ENCODE measurements at regions of chr5 and their contacts with region 1.

Region 1: DNA sequence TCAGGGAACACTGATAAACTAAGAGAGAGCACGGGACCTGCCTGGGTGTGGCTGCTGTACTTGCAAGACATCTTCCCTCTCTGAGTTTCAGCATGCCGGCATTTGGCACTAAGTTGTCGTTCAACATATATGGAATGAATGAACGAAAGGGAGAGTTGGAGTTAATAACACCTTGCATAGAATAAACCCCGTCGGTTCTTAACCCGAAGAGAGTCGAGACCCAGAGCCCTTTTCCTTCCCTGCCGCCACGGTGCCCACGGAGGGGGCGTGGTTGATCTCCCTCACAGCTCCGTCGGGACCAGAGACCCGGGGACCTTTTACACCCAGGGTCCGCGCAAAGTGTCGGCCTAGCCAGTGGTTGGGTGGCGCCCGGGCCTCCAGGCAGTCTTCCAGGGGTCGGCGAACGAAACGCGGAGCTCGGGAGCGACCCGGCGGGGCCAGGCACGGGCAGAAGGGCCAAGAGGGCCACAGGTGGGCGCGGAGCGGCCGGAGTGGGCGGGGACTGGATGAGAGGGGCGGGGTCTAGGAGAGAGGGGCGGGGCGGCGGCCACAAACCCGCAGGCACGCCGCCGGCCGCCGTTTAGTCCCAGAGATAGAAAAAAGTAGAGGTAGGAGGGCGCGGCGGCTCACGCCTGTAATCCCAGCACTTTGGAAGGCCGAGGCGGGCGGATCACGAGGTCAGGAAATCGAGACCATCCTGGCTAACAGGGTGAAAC is 735 bp upstream of the RPL26L1 start:
- DNase-seq: no peak
- H3K4me3 ChIP-seq: peak overlapping the region; percentile 94
- H3K27me3 ChIP-seq: no peaks in the 10 kb centered on the region
- CTCF ChIP-seq: no peak

Region 2: DNA sequence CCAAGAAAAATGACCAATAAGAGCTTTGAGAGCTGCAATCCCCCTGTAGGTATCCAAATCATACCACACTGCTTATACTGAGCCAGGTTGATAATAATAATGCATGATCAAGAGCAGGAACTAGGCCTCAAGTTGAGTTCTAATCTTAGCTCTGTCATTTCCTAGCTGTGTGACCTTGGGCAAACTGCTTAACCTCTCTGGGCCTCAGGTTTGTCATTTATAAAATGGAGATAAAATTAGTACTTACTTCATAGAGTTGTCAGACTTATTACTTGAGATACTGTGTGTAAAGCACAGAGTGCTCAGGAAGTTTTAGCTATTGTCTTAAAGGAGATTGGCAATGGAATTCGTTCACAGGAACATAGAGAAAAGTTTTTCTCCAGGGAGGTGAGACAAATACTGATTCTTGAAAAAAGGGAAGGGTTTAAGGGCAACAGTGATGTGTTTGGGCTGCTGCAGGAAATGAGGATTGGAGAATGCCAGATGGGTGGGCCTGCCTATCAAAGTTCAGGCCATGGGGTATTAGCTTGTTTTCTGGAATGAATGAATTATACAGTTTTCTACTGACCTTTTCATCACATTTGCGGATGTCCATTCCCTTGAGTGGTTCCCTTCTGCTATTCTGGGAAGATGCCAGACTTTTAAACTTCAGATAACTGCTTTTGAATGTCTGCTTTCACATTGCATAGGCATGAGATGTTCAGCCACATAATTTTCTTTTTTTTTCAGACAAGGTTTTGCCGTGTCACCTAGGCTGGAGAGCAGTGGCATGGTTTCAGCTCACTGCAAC is 14.8 kb after region 1 on chr5:
- CTCF ChIA-PET with region 1: interaction called, 14 read pairs
- POLR2A ChIA-PET with region 1: no interaction called
- DNase-seq: no peak
- H3K4me3 ChIP-seq: no peak overlapping the region
- H3K27me3 ChIP-seq: no peaks in the 10 kb centered on the region
- CTCF ChIP-seq: no peak